HepG2 (cell line): ENCODE measurements at regions of chr17 and their contacts with region 1.

Region 1: GRCh38 chr17:40615295-40615988 is 32.2 kb downstream of the SMARCE1 start:
- DNase-seq: peak; percentile 76
- ATAC-seq: peak; percentile 85
- H3K4me3 ChIP-seq: no peak overlapping the region
- H3K27ac ChIP-seq: no peak overlapping the region
- H3K4me1 ChIP-seq: peaks cover 55% of the 10 kb centered on the region
- H3K27me3 ChIP-seq: peaks cover 1 to 20% of the 10 kb centered on the region in 2 experiments; a peak in 3 of 5 replicates
- CTCF ChIP-seq: peak; percentile 96
- EP300 ChIP-seq: no peak
- POLR2A ChIP-seq: no peak
- RAD21 ChIP-seq: peak; percentile 95

Region 2: DNA sequence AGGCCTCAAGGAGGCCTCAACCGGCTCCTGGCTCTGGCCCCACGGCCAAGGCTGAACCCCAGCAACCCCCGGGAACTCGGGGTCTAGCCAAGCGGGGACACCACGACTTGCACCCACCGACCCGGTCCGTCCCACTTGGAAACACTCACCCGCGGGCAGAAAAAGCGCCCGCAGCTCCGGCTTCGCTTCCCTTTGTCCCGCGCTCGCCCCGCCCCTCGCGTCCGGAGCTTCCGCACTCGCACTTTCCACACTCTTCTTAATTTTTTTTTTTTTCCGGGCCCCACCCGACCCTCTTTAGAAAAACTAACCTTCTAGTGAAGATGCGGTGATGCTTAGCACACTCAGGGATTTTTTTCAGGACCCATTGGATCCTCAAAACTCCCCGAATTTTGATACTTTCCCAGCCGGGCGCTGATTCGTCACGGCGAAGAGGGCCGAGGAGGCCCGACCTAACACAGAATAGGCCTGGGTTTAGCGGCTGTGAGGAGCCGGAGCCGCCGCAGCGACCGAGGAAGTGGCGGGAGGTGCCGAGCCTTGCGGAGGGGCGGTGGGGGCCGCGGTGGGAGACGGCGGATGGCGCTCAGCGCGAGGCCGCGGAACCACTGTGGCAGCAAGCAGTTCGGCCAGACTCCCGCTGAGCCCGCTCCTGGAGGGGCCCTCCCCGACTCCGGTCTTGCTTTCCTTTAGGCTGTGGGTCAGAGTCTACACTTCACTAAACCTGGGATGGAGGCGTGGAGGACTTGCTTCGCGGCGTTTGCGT is 32.4 kb after region 1 on chr17 and contains the start of gene SMARCE1:
- CTCF ChIA-PET with region 1: no interaction called
- POLR2A ChIA-PET with region 1: interaction called, 10 read pairs
- in situ Hi-C with region 1: no loop called
- intact Hi-C with region 1: no loop called
- DNase-seq: peak; percentile 66
- ATAC-seq: peak; percentile 91
- H3K4me3 ChIP-seq: peak within 1 kb of the TSS; percentile 97
- H3K27ac ChIP-seq: peak within 1 kb of the TSS; percentile 96
- H3K4me1 ChIP-seq: peaks cover 41% of the 10 kb centered on the region
- H3K27me3 ChIP-seq: peaks cover 0 to 4% of the 10 kb centered on the region in 2 experiments; a peak in 1 of 5 replicates
- CTCF ChIP-seq: no peak
- EP300 ChIP-seq: peak in 1 of 2 experiments; percentile 49; a peak in 1 of 4 replicates
- POLR2A ChIP-seq: peak in 1 of 2 experiments; percentile 58; a peak in 3 of 4 replicates
- RAD21 ChIP-seq: no peak
- total RNA-seq, gene SMARCE1: 127 and 168 TPM in 2 replicates

Region 3: DNA sequence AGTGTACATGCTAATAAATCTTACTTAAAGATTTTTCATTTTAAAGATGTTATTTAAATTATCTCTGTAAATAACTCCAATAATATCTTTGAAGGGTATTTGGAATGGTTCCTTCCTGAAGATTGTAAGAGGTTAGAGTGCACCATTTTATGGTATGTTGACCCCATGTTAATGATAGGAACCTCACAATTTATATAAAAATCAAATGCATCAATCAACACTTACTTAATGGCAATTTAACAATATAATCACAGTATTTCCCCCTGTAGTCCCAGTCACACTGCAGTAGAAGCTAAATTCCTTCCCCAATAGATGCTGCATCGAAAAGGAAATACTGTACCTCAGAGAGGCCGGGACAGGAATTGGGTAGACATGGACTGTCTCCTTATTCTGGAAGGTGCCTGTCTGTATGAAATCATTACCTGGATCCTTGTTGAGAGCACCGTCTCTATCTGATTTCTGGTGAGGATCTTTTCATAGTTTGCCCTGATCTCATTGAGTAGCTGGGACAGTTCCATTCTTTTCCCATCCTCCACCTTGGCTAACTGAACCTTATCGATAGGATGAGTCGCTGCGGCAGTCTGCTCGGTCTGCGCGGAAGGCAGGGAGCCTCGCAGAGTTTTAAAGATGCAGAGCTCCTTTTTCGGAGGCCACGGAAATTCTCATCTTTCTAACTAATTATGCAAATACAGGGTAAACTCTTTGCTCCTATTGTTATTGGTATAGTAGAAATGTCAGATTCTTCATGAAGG is 49.3 kb after region 1 on chr17 and contains the start of gene KRT222:
- CTCF ChIA-PET with region 1: no interaction called
- POLR2A ChIA-PET with region 1: no interaction called
- in situ Hi-C with region 1: no loop called
- intact Hi-C with region 1: no loop called
- DNase-seq: no peak
- ATAC-seq: no peak
- H3K4me3 ChIP-seq: no peak within 1 kb of the TSS
- H3K27ac ChIP-seq: no peak within 1 kb of the TSS
- H3K4me1 ChIP-seq: peaks cover 16% of the 10 kb centered on the region
- H3K27me3 ChIP-seq: peaks cover 4 to 20% of the 10 kb centered on the region in 2 experiments; a peak in 4 of 5 replicates
- CTCF ChIP-seq: no peak
- EP300 ChIP-seq: no peak
- POLR2A ChIP-seq: no peak
- RAD21 ChIP-seq: no peak
- total RNA-seq, gene KRT222: not detected in 2 replicates

Region 4: DNA sequence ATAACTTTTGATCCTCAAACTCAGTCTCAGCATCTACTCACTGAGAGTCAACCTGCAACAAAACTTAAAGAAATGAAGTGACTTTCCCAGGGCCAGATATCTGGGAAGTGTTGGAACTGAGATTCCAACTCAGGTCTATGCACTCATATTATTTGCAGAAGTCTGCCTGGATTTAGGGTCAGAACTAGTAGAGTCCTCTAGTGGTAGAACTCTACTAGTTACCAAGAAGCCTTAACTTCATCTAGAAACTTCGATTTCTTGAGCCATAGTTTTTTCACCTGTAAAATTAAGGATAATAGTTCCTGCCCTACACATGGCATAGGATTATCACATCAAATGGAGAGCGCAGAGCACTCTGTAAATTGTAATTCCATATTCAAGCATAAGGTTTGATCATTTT is 111.5 kb after region 1 on chr17:
- CTCF ChIA-PET with region 1: interaction called, 3 read pairs
- POLR2A ChIA-PET with region 1: no interaction called
- in situ Hi-C with region 1: no loop called
- intact Hi-C with region 1: loop called (anchors 2 kb)
- DNase-seq: peak; percentile 35
- ATAC-seq: no peak
- H3K4me3 ChIP-seq: no peak overlapping the region
- H3K27ac ChIP-seq: no peak overlapping the region
- H3K4me1 ChIP-seq: no peaks in the 10 kb centered on the region
- H3K27me3 ChIP-seq: no peaks in the 10 kb centered on the region
- CTCF ChIP-seq: peak; percentile 44
- EP300 ChIP-seq: no peak
- POLR2A ChIP-seq: no peak
- RAD21 ChIP-seq: no peak

Region 5: DNA sequence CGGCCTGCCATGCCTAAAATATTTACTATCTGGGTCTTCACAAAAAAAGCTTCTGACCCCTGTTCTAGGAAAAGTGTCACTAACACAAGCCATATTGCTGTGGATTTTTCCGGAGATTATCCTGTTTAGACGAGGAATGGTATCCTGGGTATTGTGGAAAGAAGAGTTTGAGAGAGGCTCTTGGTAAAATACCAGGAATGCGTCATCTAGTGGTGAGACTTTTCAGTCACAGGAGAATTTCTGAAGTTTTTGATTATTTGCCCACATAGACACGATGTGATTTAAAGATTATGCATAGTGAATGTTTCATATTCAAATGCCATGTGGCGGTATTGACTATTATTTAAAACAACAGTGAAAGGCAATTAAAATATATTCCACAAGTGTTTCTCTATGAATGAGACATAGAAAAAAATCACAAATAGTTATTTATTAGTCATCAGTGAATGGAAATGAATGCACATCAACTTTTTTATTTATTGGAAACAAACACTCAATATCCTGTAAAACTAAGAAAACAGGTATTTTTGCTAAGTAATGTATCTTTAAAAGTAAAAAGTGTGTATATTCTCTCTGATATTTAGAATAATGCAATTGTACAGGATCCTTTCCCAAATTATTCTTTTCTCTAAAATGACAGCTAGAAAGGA is 176.5 kb after region 1 on chr17:
- CTCF ChIA-PET with region 1: interaction called, 44 read pairs
- POLR2A ChIA-PET with region 1: no interaction called
- in situ Hi-C with region 1: loop called (anchors 5 kb)
- intact Hi-C with region 1: loop called (anchors 1 kb)
- DNase-seq: peak; percentile 45
- ATAC-seq: no peak; the same call in 2 of the 3 replicates
- H3K4me3 ChIP-seq: no peak overlapping the region
- H3K27ac ChIP-seq: no peak overlapping the region
- H3K4me1 ChIP-seq: no peaks in the 10 kb centered on the region
- H3K27me3 ChIP-seq: peaks cover 0 to 39% of the 10 kb centered on the region in 2 experiments; a peak in 3 of 5 replicates
- CTCF ChIP-seq: peak; percentile 72
- EP300 ChIP-seq: no peak
- POLR2A ChIP-seq: no peak
- RAD21 ChIP-seq: peak; percentile 35; the same call in 1 of the 2 replicates

Region 6: GRCh38 chr17:40854159-40854814 is 238.8 kb after region 1 on chr17:
- CTCF ChIA-PET with region 1: no interaction called
- POLR2A ChIA-PET with region 1: no interaction called
- in situ Hi-C with region 1: no loop called
- intact Hi-C with region 1: loop called (anchors 5 kb)
- DNase-seq: peak; percentile 55
- ATAC-seq: peak; percentile 46; the same call in 1 of the 3 replicates
- H3K4me3 ChIP-seq: no peak overlapping the region
- H3K27ac ChIP-seq: no peak overlapping the region
- H3K4me1 ChIP-seq: peaks cover 10% of the 10 kb centered on the region; the same call in 1 of the 2 replicates
- H3K27me3 ChIP-seq: 0 out of 5 replicates have a peak, but pooled peaks cover 0 to 3% of the 10 kb centered on the region in 2 experiments
- CTCF ChIP-seq: no peak
- EP300 ChIP-seq: peak in 1 of 2 experiments; percentile 66; a peak in 2 of 4 replicates
- POLR2A ChIP-seq: no peak
- RAD21 ChIP-seq: no peak